ENCODE measurements at regions of chr5 and their contacts with region 1.

Region 1: GRCh38 chr5:155091063-155091648 is 77.6 kb downstream of the KIF4B start:
- DNase-seq: peak in 1 of 2 donors; percentile 58
- ATAC-seq: peak; percentile 41 to 90 (median 84)
- H3K4me3 ChIP-seq: no peak overlapping the region
- H3K27ac ChIP-seq: peak overlapping the region; percentile 8 to 83 (median 66)
- H3K4me1 ChIP-seq: peaks cover 0 to 34% (median 13%) of the 10 kb centered on the region in 9 donors
- H3K27me3 ChIP-seq: no peaks in the 10 kb centered on the region
- CTCF ChIP-seq: no peak

Region 2: DNA sequence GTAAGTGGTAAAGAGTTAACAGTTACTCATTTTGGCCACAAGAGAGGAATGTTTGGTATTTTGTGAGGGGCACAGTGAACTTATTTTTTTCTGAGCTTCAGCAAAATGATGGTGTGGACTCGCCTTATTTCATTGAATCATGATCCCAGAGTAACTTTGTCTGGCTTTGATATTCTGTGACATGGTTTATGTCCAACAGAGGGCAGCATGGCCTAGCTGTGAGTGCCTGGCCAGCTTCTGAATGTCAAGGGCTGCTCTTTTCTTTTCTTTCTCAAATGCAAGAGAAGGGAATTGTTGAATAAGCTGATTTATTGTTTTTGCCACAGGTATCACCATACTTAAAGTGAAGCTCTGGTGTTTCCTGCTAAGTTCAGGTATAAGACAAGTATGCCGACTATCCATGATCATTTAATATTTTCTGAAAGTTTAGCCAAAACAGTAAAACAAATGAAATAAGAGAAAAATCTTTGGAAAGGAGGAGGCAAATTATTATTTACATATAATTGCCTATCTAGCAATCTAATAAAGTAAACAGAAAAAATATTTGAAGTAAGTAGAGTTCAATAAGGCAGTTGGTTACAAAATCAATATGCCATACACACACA is 118.6 kb before region 1 on chr5:
- intact Hi-C with region 1: loop called in 1 of 10 experiments (anchors 2 kb)
- DNase-seq: peak in 1 of 2 donors; percentile 24
- ATAC-seq: peak in 5 of 8 donors; percentile 51 to 76 (median 74)
- H3K4me3 ChIP-seq: no peak overlapping the region
- H3K27ac ChIP-seq: no peak overlapping the region
- H3K4me1 ChIP-seq: peaks cover 0 to 12% (median 0%) of the 10 kb centered on the region in 9 donors
- H3K27me3 ChIP-seq: no peaks in the 10 kb centered on the region
- CTCF ChIP-seq: peak; percentile 38 to 74 (median 63)

Region 3: GRCh38 chr5:155049569-155050383 is 41.4 kb before region 1 on chr5:
- intact Hi-C with region 1: loop called in 2 of 10 experiments (anchors 5 kb)
- DNase-seq: no peak
- ATAC-seq: no peak
- H3K4me3 ChIP-seq: no peak overlapping the region
- H3K27ac ChIP-seq: no peak overlapping the region
- H3K4me1 ChIP-seq: peaks cover 0 to 17% (median 5%) of the 10 kb centered on the region in 9 donors
- H3K27me3 ChIP-seq: no peaks in the 10 kb centered on the region
- CTCF ChIP-seq: peak in 2 of 9 donors; percentile 8 to 12

Region 4: DNA sequence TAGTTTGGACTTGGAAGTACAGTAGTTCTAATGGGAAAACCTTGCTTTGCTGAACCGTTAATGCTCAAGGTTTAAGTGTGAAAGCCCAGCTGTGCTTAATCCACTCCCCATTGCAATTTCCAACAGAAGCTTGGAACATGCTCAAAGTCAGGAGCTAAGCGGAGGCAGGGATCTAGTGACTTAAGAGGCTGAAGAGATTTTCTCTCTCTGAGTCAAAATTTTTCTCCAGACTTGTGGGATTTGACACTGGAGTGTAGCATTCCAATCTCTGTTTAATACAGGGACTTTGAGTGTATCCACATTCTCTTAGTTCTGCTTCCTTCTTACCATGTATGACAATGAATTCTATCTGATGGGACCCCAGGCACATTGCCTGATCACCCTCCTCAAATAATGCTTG is 394.2 kb after region 1 on chr5:
- intact Hi-C with region 1: loop called in 2 of 10 experiments (anchors 5 kb)
- DNase-seq: no peak
- ATAC-seq: no peak
- H3K4me3 ChIP-seq: no peak overlapping the region
- H3K27ac ChIP-seq: peak overlapping the region in 2 of 10 donors; percentile 7 to 20
- H3K4me1 ChIP-seq: peaks cover 0 to 15% (median 0%) of the 10 kb centered on the region in 9 donors
- H3K27me3 ChIP-seq: no peaks in the 10 kb centered on the region
- CTCF ChIP-seq: no peak